Gastrocnemius medialis (tissue), 4 donors: ENCODE measurements at regions of chr12 and their contacts with region 1.

Region 1: DNA sequence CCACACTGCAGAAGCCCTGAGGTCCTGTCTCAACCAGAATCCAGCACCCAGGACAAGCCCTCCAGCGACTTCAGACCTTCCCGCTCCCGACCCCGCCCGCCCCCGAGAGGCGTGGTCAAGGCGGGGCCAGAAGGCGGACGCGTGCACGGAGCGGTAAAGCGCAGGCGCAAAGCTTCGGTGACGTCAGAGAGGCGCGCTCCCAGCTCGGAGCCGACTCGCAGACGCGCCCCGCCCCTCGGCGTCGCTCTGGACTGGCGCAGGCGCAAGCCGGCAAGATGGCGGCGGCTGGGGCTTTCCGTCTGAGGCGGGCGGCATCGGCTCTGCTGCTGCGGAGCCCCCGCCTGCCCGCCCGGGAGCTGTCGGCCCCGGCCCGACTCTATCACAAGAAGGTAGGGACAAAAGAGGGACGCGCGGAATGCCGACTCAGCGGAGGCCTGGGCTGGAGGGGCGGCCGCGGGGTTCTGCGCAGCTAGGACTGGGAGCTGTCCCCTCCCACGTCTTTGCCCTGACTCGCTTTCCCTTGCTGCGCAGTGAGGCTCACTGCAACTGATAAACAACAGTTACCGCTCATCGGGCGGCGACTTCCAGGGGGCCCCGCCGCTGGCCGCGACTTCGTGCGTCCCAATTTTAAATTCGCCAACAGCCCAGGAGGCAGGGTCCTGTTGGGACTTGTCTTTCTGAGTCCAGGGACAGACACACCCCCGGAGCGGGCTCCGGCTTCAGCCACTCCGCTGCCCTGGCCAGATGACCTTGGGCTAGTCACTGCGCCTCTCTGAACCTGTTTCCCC is at the start of gene ISCU:
- DNase-seq: peak; percentile 95 to 96
- ATAC-seq: peak; percentile 70 to 71
- H3K4me3 ChIP-seq: peak within 1 kb of the TSS; percentile 90 to 100 (median 94)
- H3K27ac ChIP-seq: peak within 1 kb of the TSS; percentile 92 to 97 (median 96)
- H3K4me1 ChIP-seq: peaks cover 55 to 56% of the 10 kb centered on the region in 2 donors
- H3K27me3 ChIP-seq: no peaks in the 10 kb centered on the region
- CTCF ChIP-seq: no peak
- POLR2A ChIP-seq: peak; percentile 96 to 98
- total RNA-seq, gene ISCU: 232 to 337 (median 249) TPM

Region 2: DNA sequence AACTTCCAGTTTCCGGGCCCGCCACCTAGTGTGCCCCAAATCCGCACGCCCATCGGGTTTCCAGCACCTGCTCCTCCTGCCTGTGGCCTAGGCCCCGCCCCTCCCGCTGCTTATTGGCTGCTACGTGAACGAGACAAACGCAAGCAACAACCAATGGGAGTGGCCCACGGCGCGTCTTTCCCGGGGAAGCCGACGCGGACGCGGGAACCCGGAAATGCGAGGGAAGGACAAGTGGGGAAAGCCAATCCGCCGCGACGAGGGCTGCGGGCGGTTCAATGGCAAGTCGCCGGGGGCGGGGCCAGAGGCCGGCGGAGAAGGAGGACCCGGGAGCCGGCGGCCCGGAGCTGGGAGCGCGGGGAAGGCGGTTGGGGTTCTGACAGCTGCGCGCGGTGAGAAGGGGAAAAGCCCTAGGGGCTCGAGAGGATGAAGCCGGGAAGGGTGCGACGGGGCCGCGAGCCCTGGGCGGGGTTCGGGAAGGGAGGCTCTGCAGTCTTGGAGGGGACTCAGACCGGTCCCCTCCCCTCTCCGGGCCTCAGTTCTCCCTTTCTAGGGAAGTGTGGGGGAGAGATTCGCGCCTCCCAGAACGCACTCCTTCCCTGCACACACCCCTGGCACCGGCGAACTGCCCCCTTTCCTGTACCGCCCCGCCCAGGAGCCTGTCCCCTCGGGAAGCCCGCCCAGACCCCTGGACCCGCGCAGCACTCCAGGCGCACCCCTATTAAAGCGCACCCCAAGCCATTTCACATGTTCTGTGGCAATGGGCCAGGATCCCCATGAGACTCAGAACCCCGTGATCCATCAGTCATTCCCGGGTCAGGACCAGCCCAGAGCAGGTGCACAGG is 47.3 kb before region 1 on chr12 and contains the start of gene FICD:
- in situ Hi-C with region 1: no loop called
- intact Hi-C with region 1: loop called (anchors 1 kb)
- DNase-seq: peak; percentile 99
- ATAC-seq: peak; percentile 96 to 97
- H3K4me3 ChIP-seq: peak within 1 kb of the TSS; percentile 82 to 97 (median 86)
- H3K27ac ChIP-seq: peak within 1 kb of the TSS; percentile 79 to 84 (median 82)
- H3K4me1 ChIP-seq: peaks cover 16 to 19% of the 10 kb centered on the region in 2 donors
- H3K27me3 ChIP-seq: no peaks in the 10 kb centered on the region
- CTCF ChIP-seq: no peak
- POLR2A ChIP-seq: peak; percentile 40 to 53
- total RNA-seq, gene FICD: 3.1 to 4.6 (median 3.6) TPM

Region 3: GRCh38 chr12:108589028-108589839 is 26.7 kb after region 1 on chr12:
- in situ Hi-C with region 1: no loop called
- intact Hi-C with region 1: no loop called
- DNase-seq: no peak
- ATAC-seq: no peak
- H3K4me3 ChIP-seq: no peak overlapping the region
- H3K27ac ChIP-seq: no peak overlapping the region
- H3K4me1 ChIP-seq: no peaks in the 10 kb centered on the region
- H3K27me3 ChIP-seq: no peaks in the 10 kb centered on the region
- CTCF ChIP-seq: no peak
- POLR2A ChIP-seq: no peak

Region 4: GRCh38 chr12:108731105-108731865 is 168.7 kb after region 1 on chr12 and contains the start of gene CORO1C:
- in situ Hi-C with region 1: no loop called
- intact Hi-C with region 1: loop called (anchors 5 kb)
- DNase-seq: peak; percentile 96 to 98
- ATAC-seq: peak; percentile 66 to 73
- H3K4me3 ChIP-seq: peak within 1 kb of the TSS; percentile 91 to 99 (median 96)
- H3K27ac ChIP-seq: peak within 1 kb of the TSS; percentile 96 to 100 (median 100)
- H3K4me1 ChIP-seq: peaks cover 34 to 38% of the 10 kb centered on the region in 2 donors
- H3K27me3 ChIP-seq: no peaks in the 10 kb centered on the region
- CTCF ChIP-seq: peak; percentile 82 to 97 (median 96)
- POLR2A ChIP-seq: peak; percentile 99 to 100
- total RNA-seq, gene CORO1C: 24.7 to 47.6 (median 30.9) TPM

Region 5: DNA sequence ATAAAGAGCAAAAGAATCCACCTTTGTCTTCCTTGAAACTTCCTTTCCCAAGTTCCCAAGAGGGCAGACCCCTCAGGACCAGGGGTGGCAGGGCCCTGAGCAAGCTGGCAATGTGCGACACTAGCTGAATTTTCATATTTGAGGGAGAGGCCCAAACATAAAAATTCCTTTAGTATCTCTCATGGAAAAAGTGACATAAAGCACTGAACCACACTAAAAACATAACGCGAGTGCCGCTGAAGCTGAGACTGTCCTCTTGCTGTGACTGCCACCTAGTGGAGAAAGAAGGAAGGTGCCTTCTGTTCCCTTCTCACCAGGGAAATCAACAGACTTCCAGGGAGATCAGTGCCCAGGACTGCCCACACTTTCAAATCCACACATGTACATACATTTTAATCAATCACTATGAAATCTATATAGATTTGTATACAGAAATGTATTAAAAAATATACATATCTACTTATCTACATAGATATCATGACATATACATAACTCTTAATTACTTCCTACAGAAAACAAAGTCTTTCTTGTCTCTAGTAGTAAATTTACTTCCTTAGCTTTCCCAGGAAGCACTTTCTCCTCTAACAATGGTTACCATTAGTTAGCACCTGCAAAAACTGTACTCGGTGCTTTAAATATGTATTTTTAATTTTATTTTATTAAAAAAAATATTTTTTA is 241.0 kb after region 1 on chr12:
- in situ Hi-C with region 1: loop called in 2 of 4 experiments (anchors 10 kb)
- intact Hi-C with region 1: loop called (anchors 2 kb)
- DNase-seq: peak; percentile 69 to 80
- ATAC-seq: peak; percentile 61 to 70
- H3K4me3 ChIP-seq: peak overlapping the region in 1 of 4 donors; percentile 11
- H3K27ac ChIP-seq: peak overlapping the region; percentile 93 to 97 (median 96)
- H3K4me1 ChIP-seq: peaks cover 62% of the 10 kb centered on the region in 2 donors
- H3K27me3 ChIP-seq: no peaks in the 10 kb centered on the region
- CTCF ChIP-seq: peak; percentile 93 to 97 (median 95)
- POLR2A ChIP-seq: peak in 1 of 2 donors; percentile 11

Region 6: DNA sequence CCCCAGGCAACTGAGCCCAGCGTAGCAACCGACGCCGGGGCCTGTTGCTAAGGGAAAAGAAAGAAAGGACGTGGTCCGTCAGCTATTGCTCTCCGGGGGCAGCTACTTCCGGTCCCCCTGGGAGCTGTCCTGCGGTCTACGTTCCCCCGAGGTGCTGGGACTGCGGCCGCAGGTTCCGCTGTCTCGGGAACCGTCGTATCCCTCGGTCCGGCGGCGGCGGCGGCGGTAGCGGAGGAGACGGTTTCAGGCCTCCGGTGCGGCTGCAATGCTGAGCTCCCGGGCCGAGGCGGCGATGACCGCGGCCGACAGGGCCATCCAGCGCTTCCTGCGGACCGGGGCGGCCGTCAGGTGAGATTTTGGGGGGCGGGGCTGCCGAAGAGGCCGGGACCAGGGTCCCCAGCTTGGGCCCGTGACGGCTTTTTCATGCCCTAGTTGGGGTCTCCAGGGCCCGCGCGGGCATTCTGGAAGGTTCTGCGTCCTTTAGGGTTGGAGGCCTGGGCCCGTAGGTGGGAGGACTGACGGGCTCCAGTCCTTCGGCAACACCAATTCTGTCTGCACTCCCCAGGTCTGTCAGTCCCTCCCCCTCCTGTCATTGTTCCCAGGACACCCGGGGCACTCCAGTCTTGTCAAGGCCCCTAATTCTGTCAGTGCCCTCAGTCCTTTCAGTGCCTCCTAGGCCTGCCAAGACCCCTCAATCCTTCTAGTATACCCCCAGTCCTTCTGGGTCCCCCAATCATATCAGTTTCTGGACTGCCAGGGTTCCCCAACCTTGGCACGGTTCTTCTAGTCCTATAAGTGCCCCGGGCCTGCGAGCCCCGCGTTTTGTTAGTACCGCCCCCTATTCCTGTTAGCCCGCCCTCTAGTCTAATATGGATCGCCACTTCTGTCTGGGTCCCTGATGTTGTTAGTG is 490.1 kb after region 1 on chr12 and contains the start of gene USP30:
- in situ Hi-C with region 1: no loop called
- intact Hi-C with region 1: loop called (anchors 5 kb)
- DNase-seq: peak; percentile 68 to 74
- ATAC-seq: peak; percentile 96
- H3K4me3 ChIP-seq: peak within 1 kb of the TSS; percentile 90 to 92 (median 91)
- H3K27ac ChIP-seq: peak within 1 kb of the TSS; percentile 86 to 94 (median 90)
- H3K4me1 ChIP-seq: peaks cover 13 to 21% of the 10 kb centered on the region in 2 donors
- H3K27me3 ChIP-seq: no peaks in the 10 kb centered on the region
- CTCF ChIP-seq: peak in 2 of 5 experiments; percentile 6 to 13
- POLR2A ChIP-seq: no peak
- total RNA-seq, gene USP30: 6.4 to 21.2 (median 13.3) TPM

Region 7: DNA sequence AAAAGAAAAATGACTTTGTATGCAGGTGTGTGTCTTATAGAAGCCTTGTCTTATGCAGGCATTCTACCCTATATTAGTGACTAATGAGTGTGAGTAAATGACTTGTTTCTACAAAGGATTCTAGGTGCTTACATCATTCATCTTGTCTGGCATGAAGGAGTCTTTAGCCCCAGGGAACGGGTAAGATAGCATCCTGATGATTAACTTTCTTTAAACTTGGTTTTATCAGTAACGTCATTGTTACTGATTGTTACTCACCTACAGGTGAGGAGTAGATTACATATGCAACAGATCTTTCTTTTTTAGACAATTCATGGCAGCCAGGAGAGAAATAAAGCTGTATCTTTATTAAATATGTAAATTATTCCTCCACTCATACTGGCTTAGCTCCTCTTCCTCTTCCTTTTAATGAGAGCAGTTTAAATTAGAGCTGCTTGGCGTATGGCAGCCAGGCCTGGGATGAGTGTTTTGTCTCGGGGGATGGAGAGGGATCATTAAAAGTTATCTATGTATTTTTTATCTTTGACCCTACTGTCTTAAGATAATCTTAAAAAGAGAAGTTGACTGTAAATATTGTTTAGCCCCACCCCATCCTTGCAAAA is 1661.3 kb after region 1 on chr12:
- in situ Hi-C with region 1: no loop called
- intact Hi-C with region 1: no loop called
- DNase-seq: no peak
- ATAC-seq: no peak
- H3K4me3 ChIP-seq: peak overlapping the region in 1 of 4 donors; percentile 31
- H3K27ac ChIP-seq: peak overlapping the region; percentile 75 to 82 (median 80)
- H3K4me1 ChIP-seq: peaks cover 17 to 34% of the 10 kb centered on the region in 2 donors
- H3K27me3 ChIP-seq: no peaks in the 10 kb centered on the region
- CTCF ChIP-seq: no peak
- POLR2A ChIP-seq: no peak